GM18951 (cell line): ENCODE measurements at regions of chr1 and their contacts with region 1.

Region 1: GRCh38 chr1:112369392-112370285 is 26.4 kb upstream of the CTTNBP2NL start:
- POLR2A ChIP-seq: no peak

Region 2: DNA sequence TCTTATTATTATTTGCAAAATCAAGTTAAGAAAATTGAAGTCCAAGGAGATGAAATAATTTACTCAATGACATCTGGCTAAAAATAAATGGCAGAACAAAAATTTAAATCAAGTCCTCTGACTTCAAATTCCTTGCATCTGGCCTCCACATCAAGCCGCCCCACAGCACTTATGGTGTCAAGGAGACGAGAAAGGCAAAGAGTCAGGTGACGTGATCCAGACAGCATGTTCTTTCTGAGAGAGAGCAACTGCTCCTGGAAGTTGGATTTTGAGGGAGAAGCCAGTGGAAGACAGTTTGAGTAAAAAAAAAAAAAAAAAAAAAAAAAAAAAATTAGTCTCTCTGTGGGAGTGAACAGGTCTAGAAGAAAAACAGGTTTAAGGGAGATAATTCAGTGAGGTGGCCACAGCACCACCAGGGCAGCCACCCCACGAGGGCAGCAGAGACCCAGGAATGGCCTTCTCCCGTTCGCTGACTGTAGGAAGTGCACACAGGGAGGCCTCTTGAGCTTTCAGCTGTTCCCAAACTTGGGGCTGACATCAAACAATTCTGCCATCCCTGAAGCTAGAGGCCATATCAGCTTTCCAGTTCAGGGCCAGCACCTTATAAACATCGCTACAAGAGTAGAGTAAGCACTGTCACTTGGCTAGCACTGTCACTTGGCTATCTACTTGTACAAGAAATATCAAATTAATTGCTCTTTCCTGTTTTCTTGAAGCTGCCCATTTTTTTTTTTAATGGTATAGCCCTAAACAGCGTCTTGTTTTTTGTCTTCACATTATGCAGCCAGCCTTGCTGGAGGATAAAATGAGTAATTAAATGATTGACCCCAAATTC is 888.0 kb before region 1 on chr1:
- in situ Hi-C with region 1: loop called (anchors 25 kb)
- POLR2A ChIP-seq: no peak